ENCODE measurements at regions of chr3 and their contacts with region 1.

Region 1: GRCh38 chr3:15805756-15806266 is 8.0 kb upstream of the ANKRD28 start:
- DNase-seq: peak; percentile 89
- ATAC-seq: peak; percentile 71
- H3K4me3 ChIP-seq: peak overlapping the region; percentile 49
- H3K27ac ChIP-seq: peak overlapping the region; percentile 84
- H3K4me1 ChIP-seq: peaks cover 75% of the 10 kb centered on the region
- H3K27me3 ChIP-seq: no peaks in the 10 kb centered on the region
- CTCF ChIP-seq: no peak; a peak in 1 of 6 replicates
- EP300 ChIP-seq: peak; percentile 96 to 99
- POLR2A ChIP-seq: no peak
- RAD21 ChIP-seq: no peak

Region 2: GRCh38 chr3:15495461-15496340 is 310.1 kb before region 1 on chr3:
- CTCF ChIA-PET with region 1: no interaction called
- POLR2A ChIA-PET with region 1: no interaction called
- RAD21 ChIA-PET with region 1: no interaction called
- SMC1A ChIA-PET with region 1: no interaction called
- in situ Hi-C with region 1: no loop called
- intact Hi-C with region 1: no loop called
- DNase-seq: no peak
- ATAC-seq: no peak
- H3K4me3 ChIP-seq: no peak overlapping the region
- H3K27ac ChIP-seq: no peak overlapping the region
- H3K4me1 ChIP-seq: peaks cover 19% of the 10 kb centered on the region
- H3K27me3 ChIP-seq: no peaks in the 10 kb centered on the region
- CTCF ChIP-seq: no peak
- EP300 ChIP-seq: no peak
- POLR2A ChIP-seq: no peak
- RAD21 ChIP-seq: no peak

Region 3: GRCh38 chr3:15636003-15636709 is 169.7 kb before region 1 on chr3:
- CTCF ChIA-PET with region 1: interaction called, 288 read pairs
- POLR2A ChIA-PET with region 1: interaction called, 12 read pairs
- RAD21 ChIA-PET with region 1: interaction called, 248 read pairs
- SMC1A ChIA-PET with region 1: interaction called, 362 read pairs
- in situ Hi-C with region 1: loop called (anchors 5 kb)
- intact Hi-C with region 1: no loop called
- DNase-seq: no peak
- ATAC-seq: peak; percentile 39
- H3K4me3 ChIP-seq: no peak overlapping the region
- H3K27ac ChIP-seq: peak overlapping the region; percentile 74
- H3K4me1 ChIP-seq: peaks cover 38% of the 10 kb centered on the region
- H3K27me3 ChIP-seq: no peaks in the 10 kb centered on the region
- CTCF ChIP-seq: no peak
- EP300 ChIP-seq: no peak
- POLR2A ChIP-seq: no peak
- RAD21 ChIP-seq: no peak

Region 4: DNA sequence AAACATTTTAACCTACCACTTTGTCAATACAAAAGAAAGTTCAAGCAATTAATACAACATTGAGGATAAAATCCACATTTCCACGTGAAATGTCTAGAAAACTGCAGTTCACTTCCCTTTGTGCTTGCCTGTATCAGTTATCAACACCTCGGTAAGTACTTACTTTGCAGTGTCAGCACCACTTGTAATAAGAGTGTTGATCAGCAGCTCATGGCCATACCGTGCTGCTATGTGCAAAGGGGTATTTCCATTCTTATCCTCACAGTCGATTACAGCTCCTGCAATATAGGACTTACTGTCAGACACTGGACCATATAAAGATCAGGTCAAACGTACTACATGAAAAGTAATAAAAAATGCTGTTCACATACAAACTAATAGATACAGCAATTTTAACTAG is 92.4 kb before region 1 on chr3:
- CTCF ChIA-PET with region 1: interaction called, 24 read pairs
- POLR2A ChIA-PET with region 1: interaction called, 11 read pairs
- RAD21 ChIA-PET with region 1: interaction called, 39 read pairs
- SMC1A ChIA-PET with region 1: interaction called, 46 read pairs
- in situ Hi-C with region 1: no loop called
- intact Hi-C with region 1: loop called (anchors 5 kb)
- DNase-seq: no peak
- ATAC-seq: peak; percentile 81
- H3K4me3 ChIP-seq: no peak overlapping the region
- H3K27ac ChIP-seq: no peak overlapping the region
- H3K4me1 ChIP-seq: no peaks in the 10 kb centered on the region; the same call in 1 of the 2 replicates
- H3K27me3 ChIP-seq: no peaks in the 10 kb centered on the region
- CTCF ChIP-seq: no peak
- EP300 ChIP-seq: no peak
- POLR2A ChIP-seq: no peak
- RAD21 ChIP-seq: no peak

Region 5: GRCh38 chr3:15768421-15769255 is 37.2 kb before region 1 on chr3:
- CTCF ChIA-PET with region 1: interaction called, 9 read pairs
- POLR2A ChIA-PET with region 1: interaction called, 4 read pairs
- RAD21 ChIA-PET with region 1: interaction called, 4 read pairs
- SMC1A ChIA-PET with region 1: interaction called, 40 read pairs
- in situ Hi-C with region 1: no loop called
- intact Hi-C with region 1: loop called (anchors 2 kb)
- DNase-seq: peak; percentile 65
- ATAC-seq: peak; percentile 82
- H3K4me3 ChIP-seq: peak overlapping the region; percentile 21; the same call in 1 of the 2 replicates
- H3K27ac ChIP-seq: peak overlapping the region; percentile 45
- H3K4me1 ChIP-seq: peaks cover 23% of the 10 kb centered on the region
- H3K27me3 ChIP-seq: no peaks in the 10 kb centered on the region
- CTCF ChIP-seq: no peak
- EP300 ChIP-seq: peak; percentile 81 to 82; a peak in 3 of 4 replicates
- POLR2A ChIP-seq: no peak
- RAD21 ChIP-seq: no peak

Region 6: GRCh38 chr3:16378920-16379319 is 573.1 kb after region 1 on chr3:
- CTCF ChIA-PET with region 1: no interaction called
- POLR2A ChIA-PET with region 1: no interaction called
- RAD21 ChIA-PET with region 1: no interaction called
- SMC1A ChIA-PET with region 1: no interaction called
- in situ Hi-C with region 1: loop called (anchors 10 kb)
- intact Hi-C with region 1: no loop called
- DNase-seq: no peak
- ATAC-seq: peak; percentile 70
- H3K4me3 ChIP-seq: no peak overlapping the region
- H3K27ac ChIP-seq: peak overlapping the region; percentile 88
- H3K4me1 ChIP-seq: peaks cover 93% of the 10 kb centered on the region
- H3K27me3 ChIP-seq: no peaks in the 10 kb centered on the region
- CTCF ChIP-seq: no peak
- EP300 ChIP-seq: peak in 1 of 2 experiments; percentile 82; a peak in 2 of 4 replicates
- POLR2A ChIP-seq: 0 out of 2 replicates have a peak, but pooled peaks have one; percentile 34
- RAD21 ChIP-seq: no peak